Right ventricle myocardium superior (tissue), 1 donor: ENCODE measurements at regions of chr11 and their contacts with region 1.

Region 1: GRCh38 chr11:12281571-12282478 is 95.5 kb upstream of the PARVA start:
- DNase-seq: peak; percentile 88
- ATAC-seq: peak; percentile 86

Region 2: DNA sequence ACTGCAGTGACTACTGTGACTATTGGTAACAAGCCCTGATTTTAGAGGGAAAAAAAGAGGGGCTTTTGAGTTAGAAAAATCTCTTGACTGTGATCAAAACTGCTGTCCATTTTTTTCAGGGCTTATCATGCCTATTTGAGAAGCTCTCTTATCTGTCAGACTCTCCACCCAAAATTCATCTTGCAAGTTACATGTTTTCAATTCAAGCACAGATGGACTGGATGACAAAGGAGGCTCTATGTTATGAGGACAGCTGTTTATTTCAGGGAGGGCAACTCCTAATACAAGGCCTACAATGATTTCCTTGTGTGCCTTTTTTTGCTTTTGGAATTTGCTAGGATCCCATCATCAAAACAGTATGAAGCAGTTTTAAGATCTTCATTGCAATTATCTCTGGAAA is 475.2 kb before region 1 on chr11:
- intact Hi-C with region 1: loop called (anchors 10 kb)
- DNase-seq: no peak
- ATAC-seq: peak; percentile 49

Region 3: GRCh38 chr11:11929920-11930319 is 351.9 kb before region 1 on chr11:
- intact Hi-C with region 1: loop called (anchors 5 kb)
- DNase-seq: no peak
- ATAC-seq: no peak

Region 4: DNA sequence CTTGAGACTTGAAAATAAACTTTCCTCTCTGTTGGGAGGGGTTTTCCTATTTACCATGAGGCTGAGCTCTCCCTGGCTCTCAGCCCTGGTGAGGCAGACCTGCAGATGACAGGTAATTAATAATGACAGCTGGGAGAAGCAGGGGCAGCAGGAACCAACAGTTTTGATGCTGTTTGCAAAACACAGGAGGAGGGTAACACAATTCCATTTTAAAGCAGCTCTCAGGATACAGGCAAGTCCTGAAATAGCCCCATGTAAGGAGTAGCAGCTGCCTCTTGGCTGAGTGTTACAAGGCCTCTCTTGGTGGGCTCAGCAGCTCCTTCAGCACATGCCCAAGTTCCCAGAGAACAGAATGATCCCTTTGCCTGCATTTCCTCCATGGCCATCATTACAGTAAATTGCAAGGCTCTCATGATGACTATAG is 108.9 kb after region 1 on chr11:
- intact Hi-C with region 1: no loop called
- DNase-seq: no peak
- ATAC-seq: no peak

Region 5: DNA sequence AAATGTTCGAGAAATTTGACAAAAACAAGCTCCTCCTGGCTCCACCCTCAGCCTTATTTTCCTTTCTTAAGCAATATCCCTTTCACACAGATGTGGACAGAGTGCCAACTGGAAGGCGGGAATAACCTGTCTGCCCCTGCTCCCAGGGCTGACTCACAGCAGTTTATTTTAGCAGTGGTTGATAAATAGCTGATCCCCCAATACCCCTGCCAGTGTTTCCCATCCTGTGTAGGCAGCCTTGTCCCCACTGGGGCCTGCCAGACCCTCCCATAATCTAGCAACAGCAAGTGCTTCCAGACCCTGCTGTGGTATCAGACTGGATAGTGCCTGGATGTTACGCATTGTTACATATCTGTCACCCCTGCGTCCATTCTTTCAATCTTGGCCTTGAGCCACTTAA is 149.1 kb after region 1 on chr11:
- intact Hi-C with region 1: no loop called
- DNase-seq: peak; percentile 62
- ATAC-seq: peak; percentile 59